PC-9 (cell line): ENCODE measurements at regions of chr15 and their contacts with region 1.

Region 1: DNA sequence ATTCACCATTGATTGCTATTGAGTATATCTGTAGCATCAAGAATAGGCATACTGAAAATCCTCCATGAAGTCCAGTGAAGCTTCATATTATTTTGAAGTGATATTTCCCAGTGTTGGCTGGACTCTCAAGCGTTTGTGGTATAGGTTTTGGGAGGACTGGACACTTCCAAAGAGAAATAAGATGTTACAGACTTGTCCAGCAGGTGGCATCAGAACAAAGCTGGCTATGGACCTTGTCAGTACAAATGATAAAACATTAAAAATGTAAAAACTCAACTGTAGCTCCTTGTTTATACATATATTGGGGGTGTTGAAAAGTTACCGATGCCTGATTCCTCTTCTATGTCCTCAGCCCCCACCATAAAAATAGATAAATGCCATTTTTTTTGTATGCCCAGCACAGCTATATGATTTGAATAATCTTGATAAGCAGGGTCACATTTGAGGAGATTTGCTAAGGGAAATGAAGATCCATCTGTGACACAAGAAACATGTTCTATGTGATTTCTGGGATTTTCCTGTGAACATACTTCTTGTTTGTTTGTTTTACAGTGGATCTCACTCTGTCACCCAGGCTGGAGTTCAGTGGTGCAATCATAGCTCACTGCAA is 54.5 kb upstream of the GOLGA6B start:
- DNase-seq: peak; percentile 22 to 39
- H3K4me3 ChIP-seq: no peak overlapping the region
- H3K27ac ChIP-seq: no peak overlapping the region
- H3K4me1 ChIP-seq: no peaks in the 10 kb centered on the region
- H3K27me3 ChIP-seq: no peaks in the 10 kb centered on the region
- CTCF ChIP-seq: peak; percentile 82

Region 2: GRCh38 chr15:72339777-72340177 is 260.2 kb before region 1 on chr15:
- CTCF ChIA-PET with region 1: interaction called, 10 read pairs
- POLR2A ChIA-PET with region 1: no interaction called
- intact Hi-C with region 1: no loop called
- DNase-seq: peak in 1 of 2 experiments; percentile 49
- H3K4me3 ChIP-seq: no peak overlapping the region
- H3K27ac ChIP-seq: peak overlapping the region; percentile 17
- H3K4me1 ChIP-seq: no peaks in the 10 kb centered on the region
- H3K27me3 ChIP-seq: no peaks in the 10 kb centered on the region
- CTCF ChIP-seq: no peak

Region 3: DNA sequence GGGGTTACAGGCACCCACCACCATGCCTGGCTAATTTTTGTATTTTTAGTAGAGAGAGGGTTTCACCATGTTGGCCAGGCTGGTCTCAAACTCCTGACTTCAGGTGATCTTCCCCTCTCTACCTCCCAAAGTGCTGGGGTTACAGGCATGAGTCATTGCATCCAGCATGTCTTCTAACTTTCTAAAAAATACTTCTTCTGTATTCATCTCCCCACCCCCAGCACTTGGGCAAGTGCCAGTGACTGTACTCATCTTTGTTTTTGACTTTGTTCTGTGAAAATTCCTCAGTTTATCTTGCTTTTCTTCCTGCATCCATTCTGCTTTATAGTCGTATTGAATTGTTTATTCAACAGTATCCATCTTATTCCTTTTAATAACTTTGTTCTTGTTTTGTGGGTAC is 78.3 kb before region 1 on chr15:
- CTCF ChIA-PET with region 1: no interaction called
- POLR2A ChIA-PET with region 1: no interaction called
- intact Hi-C with region 1: no loop called
- DNase-seq: no peak
- H3K4me3 ChIP-seq: no peak overlapping the region
- H3K27ac ChIP-seq: no peak overlapping the region
- H3K4me1 ChIP-seq: no peaks in the 10 kb centered on the region
- H3K27me3 ChIP-seq: no peaks in the 10 kb centered on the region
- CTCF ChIP-seq: no peak

Region 4: GRCh38 chr15:72671535-72671934 is 71.6 kb after region 1 on chr15:
- CTCF ChIA-PET with region 1: interaction called, 7 read pairs
- POLR2A ChIA-PET with region 1: no interaction called
- intact Hi-C with region 1: loop called (anchors 10 kb)
- DNase-seq: peak in 1 of 2 experiments; percentile 31
- H3K4me3 ChIP-seq: no peak overlapping the region
- H3K27ac ChIP-seq: no peak overlapping the region
- H3K4me1 ChIP-seq: no peaks in the 10 kb centered on the region
- H3K27me3 ChIP-seq: peaks cover 8% of the 10 kb centered on the region; the same call in 1 of the 2 replicates
- CTCF ChIP-seq: no peak

Region 5: GRCh38 chr15:73273181-73274002 is 673.4 kb after region 1 on chr15:
- CTCF ChIA-PET with region 1: no interaction called
- POLR2A ChIA-PET with region 1: no interaction called
- intact Hi-C with region 1: loop called (anchors 5 kb)
- DNase-seq: peak; percentile 32 to 37
- H3K4me3 ChIP-seq: no peak overlapping the region
- H3K27ac ChIP-seq: no peak overlapping the region
- H3K4me1 ChIP-seq: no peaks in the 10 kb centered on the region
- H3K27me3 ChIP-seq: no peaks in the 10 kb centered on the region
- CTCF ChIP-seq: peak; percentile 79